Mammary epithelial cell (primary cell): ENCODE measurements at regions of chr10 and their contacts with region 1.

Region 1: DNA sequence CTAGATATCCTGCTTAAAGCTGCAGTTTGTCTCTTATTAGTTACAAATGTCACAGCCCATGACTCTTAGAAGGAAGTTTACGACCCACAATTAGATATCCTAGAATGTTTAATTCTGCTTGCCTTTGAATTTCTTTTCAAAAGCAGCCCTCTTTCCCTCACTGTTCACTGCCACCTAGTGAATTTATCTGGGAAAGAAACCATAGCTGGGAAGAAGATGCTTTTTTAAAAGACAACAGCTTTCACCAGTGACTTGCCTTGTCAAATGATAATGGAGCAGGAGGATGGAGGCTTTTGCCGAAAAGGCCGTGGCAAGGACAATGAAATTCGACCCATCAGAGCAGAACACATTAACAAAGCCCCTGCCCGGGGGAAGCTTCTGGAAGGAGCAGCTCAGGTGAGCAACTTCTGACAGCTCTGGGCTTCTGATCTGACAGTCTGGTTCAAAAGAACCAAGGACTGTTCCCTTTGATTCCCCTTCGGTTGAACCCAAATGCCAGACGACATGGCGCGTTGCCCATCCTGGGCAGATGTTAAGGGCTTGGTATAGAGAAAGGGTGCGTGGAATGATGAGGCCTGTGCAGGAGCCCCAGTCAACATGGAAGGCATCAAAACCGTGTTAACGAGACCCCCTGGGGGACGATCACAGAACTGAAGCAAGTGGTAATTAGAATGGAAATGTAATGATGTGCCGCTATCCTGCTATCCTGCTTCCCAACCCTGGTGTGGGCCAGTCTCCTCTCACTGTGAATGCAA is 236.8 kb downstream of the FRMD4A start:
- DNase-seq: no peak
- H3K4me3 ChIP-seq: no peak overlapping the region
- H3K27ac ChIP-seq: no peak overlapping the region
- H3K4me1 ChIP-seq: no peaks in the 10 kb centered on the region
- H3K27me3 ChIP-seq: no peaks in the 10 kb centered on the region
- CTCF ChIP-seq: peak; percentile 34 to 61

Region 2: DNA sequence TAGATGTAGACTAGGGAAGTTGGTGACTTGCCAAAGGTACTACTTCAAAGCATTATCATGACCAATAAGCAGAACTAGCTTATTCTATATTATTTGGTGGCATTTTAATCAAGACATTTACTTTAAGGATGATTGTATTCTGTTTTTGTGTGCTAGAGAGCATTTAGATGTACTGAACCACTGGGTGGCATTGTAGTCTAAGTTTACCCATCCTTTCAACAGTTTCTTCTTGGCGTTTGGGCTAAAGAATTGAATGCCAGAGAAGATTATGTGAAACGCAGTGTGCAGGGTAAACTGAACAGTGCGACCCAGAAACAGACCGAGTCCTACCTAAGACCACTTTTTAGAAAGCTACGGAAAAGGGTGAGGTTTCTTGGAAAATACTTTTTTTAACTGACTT is 480.4 kb before region 1 on chr10:
- CTCF ChIA-PET with region 1: no interaction called
- dilution Hi-C with region 1: no loop called
- in situ Hi-C with region 1: no loop called
- intact Hi-C with region 1: loop called (anchors 5 kb)
- DNase-seq: no peak
- H3K4me3 ChIP-seq: no peak overlapping the region
- H3K27ac ChIP-seq: no peak overlapping the region
- H3K4me1 ChIP-seq: no peaks in the 10 kb centered on the region
- H3K27me3 ChIP-seq: no peaks in the 10 kb centered on the region
- CTCF ChIP-seq: peak; percentile 16 to 39

Region 3: GRCh38 chr10:13659897-13660550 is 433.9 kb before region 1 on chr10:
- CTCF ChIA-PET with region 1: no interaction called
- dilution Hi-C with region 1: no loop called
- in situ Hi-C with region 1: loop called in 1 of 2 experiments (anchors 25 kb)
- intact Hi-C with region 1: loop called (anchors 5 kb)
- DNase-seq: peak; percentile 65
- H3K4me3 ChIP-seq: no peak overlapping the region
- H3K27ac ChIP-seq: peak overlapping the region; percentile 73
- H3K4me1 ChIP-seq: peaks cover 22% of the 10 kb centered on the region
- H3K27me3 ChIP-seq: no peaks in the 10 kb centered on the region
- CTCF ChIP-seq: peak; percentile 87 to 93

Region 4: GRCh38 chr10:14003517-14004184 is 90.3 kb before region 1 on chr10:
- CTCF ChIA-PET with region 1: no interaction called
- dilution Hi-C with region 1: no loop called
- in situ Hi-C with region 1: no loop called
- intact Hi-C with region 1: no loop called
- DNase-seq: no peak
- H3K4me3 ChIP-seq: no peak overlapping the region
- H3K27ac ChIP-seq: no peak overlapping the region
- H3K4me1 ChIP-seq: peaks cover 5% of the 10 kb centered on the region
- H3K27me3 ChIP-seq: no peaks in the 10 kb centered on the region
- CTCF ChIP-seq: no peak

Region 5: GRCh38 chr10:14528450-14528849 is 434.5 kb after region 1 on chr10:
- CTCF ChIA-PET with region 1: no interaction called
- dilution Hi-C with region 1: no loop called
- in situ Hi-C with region 1: no loop called
- intact Hi-C with region 1: no loop called
- DNase-seq: no peak
- H3K4me3 ChIP-seq: no peak overlapping the region
- H3K27ac ChIP-seq: no peak overlapping the region
- H3K4me1 ChIP-seq: peaks cover 4% of the 10 kb centered on the region
- H3K27me3 ChIP-seq: no peaks in the 10 kb centered on the region
- CTCF ChIP-seq: no peak